ENCODE measurements at regions of chr3 and their contacts with region 1.

Region 1: GRCh38 chr3:151305101-151305750 is 11.4 kb downstream of the GPR87 start:
- DNase-seq: no peak
- H3K4me3 Mint-ChIP-seq: no peak overlapping the region
- H3K27ac Mint-ChIP-seq: peak overlapping the region; percentile 88
- H3K4me1 Mint-ChIP-seq: peaks cover 85% of the 10 kb centered on the region
- H3K27me3 Mint-ChIP-seq: no peaks in the 10 kb centered on the region

Region 2: DNA sequence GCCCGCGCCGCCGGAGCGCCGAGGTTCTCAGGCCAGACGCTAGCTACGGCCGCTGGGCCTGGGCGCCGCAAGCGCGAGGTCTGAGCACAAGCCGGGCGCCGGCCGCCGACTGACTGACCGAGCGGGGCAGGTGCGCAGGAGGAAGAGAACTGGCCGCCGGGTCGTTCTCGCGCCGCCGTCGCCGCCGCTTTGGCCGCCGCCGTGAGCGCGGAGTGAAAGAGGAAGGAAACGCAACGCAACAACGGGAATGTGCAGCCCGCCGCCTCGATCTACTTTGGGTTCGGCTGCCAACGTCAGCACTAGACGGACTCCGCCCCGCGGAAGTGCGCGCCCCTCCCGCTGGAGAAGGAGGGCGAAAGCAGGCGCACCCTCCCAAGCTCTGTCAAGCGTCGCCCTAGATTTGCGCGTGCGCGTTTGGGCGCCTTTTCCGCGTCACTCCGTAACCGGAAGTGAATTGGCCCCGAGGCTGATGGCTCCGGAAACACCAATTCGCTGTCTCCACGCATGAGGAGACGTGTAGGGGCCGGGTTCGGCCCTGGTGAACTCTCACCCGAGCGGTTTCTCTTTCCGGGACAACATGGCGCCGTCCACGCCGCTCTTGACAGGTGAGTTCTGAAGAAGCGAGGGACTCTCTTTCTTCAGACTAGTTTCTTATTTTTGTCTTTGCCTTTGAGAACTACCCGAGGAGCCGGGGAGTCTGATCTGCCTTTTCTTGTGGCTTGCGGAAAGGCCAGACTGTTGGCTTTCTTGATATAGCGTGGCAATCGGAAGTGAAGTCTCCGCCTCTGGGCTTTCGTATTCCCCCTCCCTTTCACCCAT is 758.8 kb before region 1 on chr3 and contains the starts of genes EIF2A and SERP1:
- intact Hi-C with region 1: loop called (anchors 10 kb)
- DNase-seq: peak; percentile 100
- H3K4me3 Mint-ChIP-seq: peak within 1 kb of the TSS; percentile 97
- H3K27ac Mint-ChIP-seq: peak within 1 kb of the TSS; percentile 92
- H3K4me1 Mint-ChIP-seq: peaks cover 56% of the 10 kb centered on the region
- H3K27me3 Mint-ChIP-seq: no peaks in the 10 kb centered on the region
- total RNA-seq, gene EIF2A: 124 and 126 TPM in 2 replicates
- total RNA-seq, gene SERP1: 89.2 and 91.7 TPM in 2 replicates

Region 3: GRCh38 chr3:150787741-150788370 is 517.4 kb before region 1 on chr3:
- intact Hi-C with region 1: loop called (anchors 1 kb)
- DNase-seq: peak; percentile 59
- H3K4me3 Mint-ChIP-seq: no peak overlapping the region
- H3K27ac Mint-ChIP-seq: no peak overlapping the region
- H3K4me1 Mint-ChIP-seq: peaks cover 41% of the 10 kb centered on the region
- H3K27me3 Mint-ChIP-seq: peaks cover 2% of the 10 kb centered on the region

Region 4: GRCh38 chr3:151210676-151211381 is 94.4 kb before region 1 on chr3:
- intact Hi-C with region 1: no loop called
- DNase-seq: no peak
- H3K4me3 Mint-ChIP-seq: peak overlapping the region; percentile 47
- H3K27ac Mint-ChIP-seq: peak overlapping the region; percentile 75
- H3K4me1 Mint-ChIP-seq: peaks cover 53% of the 10 kb centered on the region
- H3K27me3 Mint-ChIP-seq: no peaks in the 10 kb centered on the region

Region 5: GRCh38 chr3:151268267-151269235 is 36.7 kb before region 1 on chr3:
- intact Hi-C with region 1: loop called (anchors 1 kb)
- DNase-seq: peak; percentile 35
- H3K4me3 Mint-ChIP-seq: peak overlapping the region; percentile 7
- H3K27ac Mint-ChIP-seq: peak overlapping the region; percentile 83
- H3K4me1 Mint-ChIP-seq: peaks cover 38% of the 10 kb centered on the region
- H3K27me3 Mint-ChIP-seq: no peaks in the 10 kb centered on the region

Region 6: GRCh38 chr3:151379083-151379734 is 74.0 kb after region 1 on chr3:
- intact Hi-C with region 1: loop called (anchors 2 kb)
- DNase-seq: no peak
- H3K4me3 Mint-ChIP-seq: no peak overlapping the region
- H3K27ac Mint-ChIP-seq: no peak overlapping the region
- H3K4me1 Mint-ChIP-seq: peaks cover 2% of the 10 kb centered on the region
- H3K27me3 Mint-ChIP-seq: no peaks in the 10 kb centered on the region

Region 7: DNA sequence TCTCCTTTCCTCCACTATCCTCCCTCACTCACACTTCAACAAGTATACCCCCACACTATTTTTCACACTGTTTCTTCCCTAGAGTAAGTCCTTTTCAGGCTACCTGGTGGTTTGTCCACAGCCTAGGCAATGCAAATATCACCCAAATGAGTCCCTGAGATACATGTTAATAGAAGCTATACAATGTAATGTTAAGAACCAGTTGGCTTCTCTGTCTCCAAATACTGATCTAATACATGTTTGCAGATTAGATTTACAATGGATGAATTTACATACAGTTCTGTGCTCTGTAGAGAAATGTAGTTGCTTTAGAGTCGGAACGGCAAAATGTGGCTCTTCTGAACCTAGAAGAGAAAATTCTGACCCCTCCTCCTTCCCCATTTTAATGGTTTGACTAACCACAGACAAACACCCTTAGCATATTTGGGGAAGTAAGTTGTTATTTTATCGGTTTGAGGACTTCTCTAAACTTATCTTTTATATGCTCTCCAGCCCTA is 899.9 kb after region 1 on chr3:
- intact Hi-C with region 1: loop called (anchors 5 kb)
- DNase-seq: no peak
- H3K4me3 Mint-ChIP-seq: peak overlapping the region; percentile 86
- H3K27ac Mint-ChIP-seq: peak overlapping the region; percentile 88
- H3K4me1 Mint-ChIP-seq: peaks cover 73% of the 10 kb centered on the region
- H3K27me3 Mint-ChIP-seq: no peaks in the 10 kb centered on the region

Measured in activated T-helper 2 cell treated with anti-CD3 and anti-CD28 coated beads, Interferon-gamma antibody, Interleukin-2, Interleukin-4, amounts not matched to agents 10 μg/mL and 5 μg/mL and 100 μg/mL, durations not matched to agents 14 hours and 24 hours and 36 hours (primary cell).